ENCODE measurements at regions of chr2 and their contacts with region 1.

Region 1: DNA sequence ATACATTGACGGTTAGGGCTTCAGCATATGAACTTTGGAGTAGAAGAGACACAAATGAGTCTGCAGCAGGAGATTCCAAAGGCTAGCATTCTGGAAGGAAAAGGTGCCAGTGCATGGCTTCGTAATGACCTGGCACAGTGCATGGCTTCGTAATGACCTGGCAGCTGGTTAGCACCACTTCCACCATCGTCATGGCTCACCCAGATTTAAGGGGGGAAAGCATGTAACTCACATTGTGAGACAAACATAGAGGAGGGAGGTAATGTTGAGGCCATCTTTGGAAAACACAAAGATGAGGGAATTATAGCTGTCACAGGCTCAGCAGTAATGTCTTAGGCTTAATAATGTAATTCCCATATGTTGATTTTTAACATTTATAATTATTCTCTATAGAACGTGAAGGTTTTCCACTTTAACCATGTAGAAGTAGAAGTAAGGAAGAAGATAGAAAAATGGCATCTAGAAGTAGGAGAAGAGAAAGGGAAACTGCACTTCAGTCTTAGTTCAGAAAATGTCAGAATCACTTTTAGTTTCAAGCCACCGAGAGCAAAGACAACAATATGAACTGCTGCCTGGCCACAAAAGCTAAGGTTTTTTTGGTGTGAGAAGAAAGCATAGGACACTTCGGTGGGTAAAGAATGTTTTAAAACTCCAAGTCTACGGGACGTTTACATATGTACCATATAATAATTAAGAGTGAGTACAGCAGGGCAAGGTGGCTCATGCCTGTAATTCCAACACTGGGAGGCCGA is 6.8 kb upstream of the STK25 start:
- DNase-seq: no peak
- ATAC-seq: no peak
- H3K4me3 ChIP-seq: no peak overlapping the region
- H3K27ac ChIP-seq: no peak overlapping the region
- H3K4me1 ChIP-seq: no peaks in the 10 kb centered on the region
- H3K27me3 ChIP-seq: peaks cover 0 to 12% (median 0%) of the 10 kb centered on the region in 9 donors
- CTCF ChIP-seq: no peak
- POLR2A ChIP-seq: no peak

Region 2: GRCh38 chr2:241592126-241592845 is 77.1 kb after region 1 on chr2:
- intact Hi-C with region 1: loop called in 1 of 10 experiments (anchors 5 kb)
- DNase-seq: no peak
- ATAC-seq: peak in 1 of 4 donors; percentile 49
- H3K4me3 ChIP-seq: no peak overlapping the region
- H3K27ac ChIP-seq: no peak overlapping the region
- H3K4me1 ChIP-seq: no peaks in the 10 kb centered on the region
- H3K27me3 ChIP-seq: no peaks in the 10 kb centered on the region
- CTCF ChIP-seq: no peak
- POLR2A ChIP-seq: no peak

Measured in heart left ventricle (tissue), 16 donors.